HepG2 (cell line): ENCODE measurements at regions of chr10 and their contacts with region 1.

Region 1: DNA sequence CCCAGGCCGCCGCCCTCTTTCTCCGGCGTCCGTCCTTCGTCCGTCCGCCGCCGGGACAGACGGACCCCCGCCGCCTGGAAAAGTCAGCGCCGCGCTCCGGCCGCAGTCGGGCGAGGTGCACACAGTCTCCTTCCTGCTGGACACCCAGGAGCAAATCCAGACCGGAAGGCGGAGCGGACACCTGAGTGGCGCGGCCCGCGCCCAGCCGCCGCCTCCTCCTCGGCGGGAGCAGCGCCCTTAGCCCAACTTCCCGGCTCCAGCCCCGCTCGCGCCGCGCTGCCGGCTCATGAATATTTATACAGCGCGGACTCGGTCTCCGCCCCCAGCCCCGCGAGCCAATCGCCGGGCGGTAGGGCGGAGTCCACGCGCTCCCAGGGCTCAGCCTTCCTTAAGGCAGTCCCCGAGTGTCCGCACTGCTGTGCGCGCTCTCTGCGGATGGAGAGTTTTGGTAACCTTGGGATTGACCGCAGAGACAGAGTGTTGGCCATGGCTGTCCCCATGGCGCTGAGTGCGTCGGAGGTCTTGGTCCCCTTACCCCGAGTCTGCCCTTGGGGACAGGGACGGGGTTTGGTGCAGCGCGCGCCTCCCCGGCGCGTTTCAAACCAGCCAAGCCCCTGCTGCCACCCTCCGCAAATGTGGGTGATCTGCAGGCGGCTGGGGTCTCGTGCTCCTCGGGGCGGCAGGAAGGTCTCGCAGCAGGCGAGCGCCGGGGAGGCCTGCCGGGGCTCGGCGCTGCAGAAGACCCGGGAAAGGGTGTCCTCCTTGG is at the start of gene FZD8:
- DNase-seq: peak; percentile 68
- ATAC-seq: peak; percentile 93
- H3K4me3 ChIP-seq: peak within 1 kb of the TSS; percentile 51 to 68 (median 58); a peak in 5 of 6 replicates
- H3K27ac ChIP-seq: no peak within 1 kb of the TSS
- H3K4me1 ChIP-seq: peaks cover 20% of the 10 kb centered on the region
- H3K27me3 ChIP-seq: peaks cover 6 to 30% of the 10 kb centered on the region in 2 experiments
- CTCF ChIP-seq: peak; percentile 40
- EP300 ChIP-seq: no peak
- POLR2A ChIP-seq: no peak
- RAD21 ChIP-seq: no peak
- total RNA-seq, gene FZD8: 0.07 TPM in 1 of 2 replicates, not detected in the other

Region 2: DNA sequence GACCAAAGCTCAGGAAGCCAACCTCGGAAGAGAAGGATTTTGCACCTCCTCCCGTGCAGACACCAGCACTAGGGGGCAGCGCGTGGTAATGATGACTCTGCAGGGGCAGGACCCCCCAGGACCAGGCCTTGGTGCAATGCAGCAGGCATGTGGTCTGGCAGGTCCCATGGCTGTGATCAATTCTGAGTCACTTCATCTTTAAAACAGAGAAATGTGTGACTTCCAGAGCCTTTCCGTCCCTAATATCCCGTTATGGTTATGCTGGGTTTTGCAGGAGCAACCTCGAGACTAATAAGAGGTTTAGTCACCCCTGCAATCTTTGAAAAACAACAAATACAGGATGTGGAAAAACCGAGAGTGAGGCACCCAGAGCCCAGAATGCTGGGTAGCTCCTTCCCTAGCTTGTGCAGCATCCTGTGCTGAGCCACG is 67.3 kb before region 1 on chr10:
- CTCF ChIA-PET with region 1: no interaction called
- POLR2A ChIA-PET with region 1: no interaction called
- in situ Hi-C with region 1: no loop called
- intact Hi-C with region 1: no loop called
- DNase-seq: no peak
- ATAC-seq: peak; percentile 51
- H3K4me3 ChIP-seq: no peak overlapping the region
- H3K27ac ChIP-seq: no peak overlapping the region
- H3K4me1 ChIP-seq: no peaks in the 10 kb centered on the region
- H3K27me3 ChIP-seq: no peaks in the 10 kb centered on the region
- CTCF ChIP-seq: peak; percentile 61
- EP300 ChIP-seq: no peak
- POLR2A ChIP-seq: no peak
- RAD21 ChIP-seq: no peak

Region 3: GRCh38 chr10:35626971-35627507 is 15.2 kb before region 1 on chr10:
- CTCF ChIA-PET with region 1: no interaction called
- POLR2A ChIA-PET with region 1: no interaction called
- in situ Hi-C with region 1: no loop called
- intact Hi-C with region 1: no loop called
- DNase-seq: no peak
- ATAC-seq: no peak
- H3K4me3 ChIP-seq: no peak overlapping the region
- H3K27ac ChIP-seq: no peak overlapping the region
- H3K4me1 ChIP-seq: no peaks in the 10 kb centered on the region
- H3K27me3 ChIP-seq: no peaks in the 10 kb centered on the region; a peak in 1 of 5 replicates
- CTCF ChIP-seq: no peak
- EP300 ChIP-seq: no peak
- POLR2A ChIP-seq: no peak
- RAD21 ChIP-seq: no peak

Region 4: DNA sequence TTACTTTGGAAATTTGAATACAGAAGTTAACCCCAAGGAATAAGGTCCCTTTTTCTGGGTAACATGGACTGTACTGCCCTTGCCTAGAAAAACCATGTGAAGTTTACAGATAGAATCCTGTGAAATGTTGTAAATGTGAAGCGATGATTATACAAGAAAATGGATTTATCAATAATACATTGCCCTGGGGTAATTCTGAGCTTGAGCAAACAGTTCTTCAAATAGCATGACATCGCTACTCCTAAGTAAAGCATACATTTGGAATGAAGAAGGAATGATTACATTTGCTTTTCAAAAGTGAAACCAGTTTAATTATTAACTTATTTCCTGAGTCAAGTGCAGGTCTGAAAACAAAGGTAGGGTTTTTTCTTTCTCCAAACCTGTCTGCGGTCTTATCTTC is 43.2 kb after region 1 on chr10:
- CTCF ChIA-PET with region 1: no interaction called
- POLR2A ChIA-PET with region 1: no interaction called
- in situ Hi-C with region 1: no loop called
- intact Hi-C with region 1: loop called (anchors 5 kb)
- DNase-seq: peak; percentile 82
- ATAC-seq: peak; percentile 95
- H3K4me3 ChIP-seq: no peak overlapping the region; a peak in 1 of 6 replicates
- H3K27ac ChIP-seq: no peak overlapping the region
- H3K4me1 ChIP-seq: peaks cover 28% of the 10 kb centered on the region
- H3K27me3 ChIP-seq: peaks cover 1 to 10% of the 10 kb centered on the region in 2 experiments; a peak in 3 of 5 replicates
- CTCF ChIP-seq: no peak
- EP300 ChIP-seq: peak in 1 of 2 experiments; percentile 36; a peak in 1 of 4 replicates
- POLR2A ChIP-seq: no peak
- RAD21 ChIP-seq: no peak

Region 5: GRCh38 chr10:35739998-35740397 is 97.8 kb after region 1 on chr10:
- CTCF ChIA-PET with region 1: no interaction called
- POLR2A ChIA-PET with region 1: no interaction called
- in situ Hi-C with region 1: no loop called
- intact Hi-C with region 1: no loop called
- DNase-seq: no peak
- ATAC-seq: no peak
- H3K4me3 ChIP-seq: no peak overlapping the region
- H3K27ac ChIP-seq: no peak overlapping the region
- H3K4me1 ChIP-seq: no peaks in the 10 kb centered on the region
- H3K27me3 ChIP-seq: no peaks in the 10 kb centered on the region
- CTCF ChIP-seq: no peak
- EP300 ChIP-seq: no peak
- POLR2A ChIP-seq: no peak
- RAD21 ChIP-seq: no peak

Region 6: GRCh38 chr10:35781643-35782035 is 139.4 kb after region 1 on chr10:
- CTCF ChIA-PET with region 1: interaction called, 6 read pairs
- POLR2A ChIA-PET with region 1: no interaction called
- in situ Hi-C with region 1: loop called (anchors 10 kb)
- intact Hi-C with region 1: loop called (anchors 2 kb)
- DNase-seq: peak; percentile 30
- ATAC-seq: peak; percentile 50; the same call in 2 of the 3 replicates
- H3K4me3 ChIP-seq: no peak overlapping the region
- H3K27ac ChIP-seq: no peak overlapping the region
- H3K4me1 ChIP-seq: no peaks in the 10 kb centered on the region
- H3K27me3 ChIP-seq: no peaks in the 10 kb centered on the region; a peak in 1 of 5 replicates
- CTCF ChIP-seq: peak; percentile 51
- EP300 ChIP-seq: no peak
- POLR2A ChIP-seq: no peak
- RAD21 ChIP-seq: no peak

Region 7: GRCh38 chr10:36779234-36779846 is 1137.1 kb after region 1 on chr10:
- CTCF ChIA-PET with region 1: no interaction called
- POLR2A ChIA-PET with region 1: no interaction called
- in situ Hi-C with region 1: loop called (anchors 5 kb)
- intact Hi-C with region 1: loop called (anchors 1 kb)
- DNase-seq: peak; percentile 30
- ATAC-seq: peak; percentile 90
- H3K4me3 ChIP-seq: no peak overlapping the region
- H3K27ac ChIP-seq: no peak overlapping the region
- H3K4me1 ChIP-seq: no peaks in the 10 kb centered on the region
- H3K27me3 ChIP-seq: no peaks in the 10 kb centered on the region; a peak in 1 of 5 replicates
- CTCF ChIP-seq: peak; percentile 71
- EP300 ChIP-seq: no peak
- POLR2A ChIP-seq: no peak
- RAD21 ChIP-seq: peak; percentile 45; the same call in 1 of the 2 replicates